H1 (cell line): ENCODE measurements at regions of chr6 and their contacts with region 1.

Region 1: GRCh38 chr6:2791124-2791974 is 26.2 kb downstream of the WRNIP1 start:
- DNase-seq: no peak
- H3K4me3 ChIP-seq: no peak overlapping the region
- H3K27ac ChIP-seq: no peak overlapping the region
- H3K4me1 ChIP-seq: no peaks in the 10 kb centered on the region; a peak in 1 of 7 replicates
- H3K27me3 ChIP-seq: no peaks in the 10 kb centered on the region
- CTCF ChIP-seq: peak; percentile 64 to 89 (median 88)
- EP300 ChIP-seq: no peak
- POLR2A ChIP-seq: no peak
- RAD21 ChIP-seq: peak; percentile 90 to 95

Region 2: GRCh38 chr6:2804516-2804915 is 13.2 kb after region 1 on chr6:
- CTCF ChIA-PET with region 1: interaction called, 21 read pairs
- POLR2A ChIA-PET with region 1: no interaction called
- DNase-seq: no peak
- H3K4me3 ChIP-seq: no peak overlapping the region
- H3K27ac ChIP-seq: no peak overlapping the region
- H3K4me1 ChIP-seq: peaks cover 0 to 5% (median 2%) of the 10 kb centered on the region in 4 experiments; a peak in 2 of 7 replicates
- H3K27me3 ChIP-seq: no peaks in the 10 kb centered on the region
- CTCF ChIP-seq: no peak
- EP300 ChIP-seq: no peak
- POLR2A ChIP-seq: no peak
- RAD21 ChIP-seq: no peak

Region 3: GRCh38 chr6:2841264-2842138 is 50.2 kb after region 1 on chr6 and contains the start of gene SERPINB1:
- CTCF ChIA-PET with region 1: interaction called, 38 read pairs
- POLR2A ChIA-PET with region 1: interaction called, 6 read pairs
- DNase-seq: peak; percentile 69 to 83
- H3K4me3 ChIP-seq: peak within 1 kb of the TSS; percentile 21 to 62 (median 53)
- H3K27ac ChIP-seq: peak within 1 kb of the TSS; percentile 87
- H3K4me1 ChIP-seq: peaks cover 8 to 17% (median 10%) of the 10 kb centered on the region in 4 experiments
- H3K27me3 ChIP-seq: no peaks in the 10 kb centered on the region
- CTCF ChIP-seq: peak in 2 of 3 experiments; percentile 5 to 17; a peak in 2 of 4 replicates
- EP300 ChIP-seq: peak in 1 of 2 experiments; percentile 34; a peak in 1 of 3 replicates
- POLR2A ChIP-seq: peak; percentile 59 to 79
- RAD21 ChIP-seq: peak in 1 of 2 experiments; percentile 19; a peak in 1 of 4 replicates
- total RNA-seq, gene SERPINB1: 17.3 and 20.0 TPM in 2 replicates

Region 4: GRCh38 chr6:2870056-2870674 is 78.8 kb after region 1 on chr6:
- CTCF ChIA-PET with region 1: interaction called, 14 read pairs
- POLR2A ChIA-PET with region 1: no interaction called
- DNase-seq: no peak
- H3K4me3 ChIP-seq: no peak overlapping the region
- H3K27ac ChIP-seq: no peak overlapping the region
- H3K4me1 ChIP-seq: peaks cover 12 to 21% (median 16%) of the 10 kb centered on the region in 4 experiments
- H3K27me3 ChIP-seq: peaks cover 0 to 7% (median 6%) of the 10 kb centered on the region in 4 experiments; a peak in 3 of 7 replicates
- CTCF ChIP-seq: no peak
- EP300 ChIP-seq: no peak
- POLR2A ChIP-seq: no peak
- RAD21 ChIP-seq: no peak

Region 5: GRCh38 chr6:2921520-2922115 is 130.3 kb after region 1 on chr6:
- CTCF ChIA-PET with region 1: no interaction called
- POLR2A ChIA-PET with region 1: no interaction called
- DNase-seq: peak in 1 of 2 experiments; percentile 37
- H3K4me3 ChIP-seq: no peak overlapping the region
- H3K27ac ChIP-seq: no peak overlapping the region
- H3K4me1 ChIP-seq: peaks cover 7 to 38% (median 25%) of the 10 kb centered on the region in 4 experiments
- H3K27me3 ChIP-seq: no peaks in the 10 kb centered on the region
- CTCF ChIP-seq: no peak
- EP300 ChIP-seq: no peak
- POLR2A ChIP-seq: no peak
- RAD21 ChIP-seq: no peak

Region 6: GRCh38 chr6:2952557-2953095 is 161.3 kb after region 1 on chr6:
- CTCF ChIA-PET with region 1: interaction called, 28 read pairs
- POLR2A ChIA-PET with region 1: no interaction called
- DNase-seq: peak; percentile 89 to 97
- H3K4me3 ChIP-seq: no peak overlapping the region; a peak in 1 of 8 replicates
- H3K27ac ChIP-seq: no peak overlapping the region
- H3K4me1 ChIP-seq: peaks cover 0 to 7% (median 3%) of the 10 kb centered on the region in 4 experiments; a peak in 6 of 7 replicates
- H3K27me3 ChIP-seq: no peaks in the 10 kb centered on the region
- CTCF ChIP-seq: peak; percentile 79 to 99 (median 89)
- EP300 ChIP-seq: no peak
- POLR2A ChIP-seq: no peak
- RAD21 ChIP-seq: peak; percentile 60 to 74

Region 7: GRCh38 chr6:3031857-3032640 is 240.7 kb after region 1 on chr6:
- CTCF ChIA-PET with region 1: no interaction called
- POLR2A ChIA-PET with region 1: no interaction called
- DNase-seq: no peak
- H3K4me3 ChIP-seq: no peak overlapping the region
- H3K27ac ChIP-seq: no peak overlapping the region
- H3K4me1 ChIP-seq: peaks cover 0 to 4% (median 0%) of the 10 kb centered on the region in 4 experiments; a peak in 2 of 7 replicates
- H3K27me3 ChIP-seq: no peaks in the 10 kb centered on the region
- CTCF ChIP-seq: peak; percentile 25 to 43 (median 38)
- EP300 ChIP-seq: no peak
- POLR2A ChIP-seq: no peak
- RAD21 ChIP-seq: peak; percentile 44 to 62